ENCODE measurements at regions of chr12 and their contacts with region 1.

Region 1: GRCh38 chr12:104137913-104138796 is at the start of gene NFYB:
- DNase-seq: peak; percentile 82 to 98 (median 90)
- ATAC-seq: peak; percentile 95
- H3K4me3 ChIP-seq: peak within 1 kb of the TSS; percentile 63 to 71
- H3K4me3 Mint-ChIP-seq: peak within 1 kb of the TSS; percentile 92
- H3K27ac ChIP-seq: peak within 1 kb of the TSS; percentile 57 to 58
- H3K27ac Mint-ChIP-seq: peak within 1 kb of the TSS; percentile 87
- H3K4me1 ChIP-seq: peaks cover 31% of the 10 kb centered on the region
- H3K4me1 Mint-ChIP-seq: peaks cover 16% of the 10 kb centered on the region
- H3K27me3 ChIP-seq: no peaks in the 10 kb centered on the region
- H3K27me3 Mint-ChIP-seq: no peaks in the 10 kb centered on the region
- CTCF ChIP-seq: no peak
- total RNA-seq, gene NFYB: 9.1 to 11.2 TPM

Region 2: GRCh38 chr12:103833891-103834290 is 304.3 kb before region 1 on chr12:
- CTCF ChIA-PET with region 1: no interaction called
- POLR2A ChIA-PET with region 1: no interaction called
- intact Hi-C with region 1: no loop called
- DNase-seq: no peak
- ATAC-seq: no peak
- H3K4me3 ChIP-seq: no peak overlapping the region
- H3K4me3 Mint-ChIP-seq: no peak overlapping the region
- H3K27ac ChIP-seq: no peak overlapping the region
- H3K27ac Mint-ChIP-seq: no peak overlapping the region
- H3K4me1 ChIP-seq: no peaks in the 10 kb centered on the region
- H3K4me1 Mint-ChIP-seq: peaks cover 2% of the 10 kb centered on the region
- H3K27me3 ChIP-seq: no peaks in the 10 kb centered on the region
- H3K27me3 Mint-ChIP-seq: no peaks in the 10 kb centered on the region
- CTCF ChIP-seq: no peak

Region 3: GRCh38 chr12:104064031-104064822 is 73.9 kb before region 1 on chr12 and contains the start of gene HCFC2:
- CTCF ChIA-PET with region 1: no interaction called
- POLR2A ChIA-PET with region 1: interaction called, 9 read pairs
- intact Hi-C with region 1: loop called (anchors 1 kb)
- DNase-seq: peak; percentile 71 to 92 (median 87)
- ATAC-seq: peak; percentile 92
- H3K4me3 ChIP-seq: peak within 1 kb of the TSS; percentile 75 to 98
- H3K4me3 Mint-ChIP-seq: peak within 1 kb of the TSS; percentile 95
- H3K27ac ChIP-seq: peak within 1 kb of the TSS; percentile 61 to 64
- H3K27ac Mint-ChIP-seq: peak within 1 kb of the TSS; percentile 93
- H3K4me1 ChIP-seq: peaks cover 7% of the 10 kb centered on the region
- H3K4me1 Mint-ChIP-seq: peaks cover 29% of the 10 kb centered on the region
- H3K27me3 ChIP-seq: peaks cover 0 to 3% of the 10 kb centered on the region in 2 experiments
- H3K27me3 Mint-ChIP-seq: peaks cover 4% of the 10 kb centered on the region
- CTCF ChIP-seq: no peak
- total RNA-seq, gene HCFC2: 13.9 to 16.7 TPM

Region 4: DNA sequence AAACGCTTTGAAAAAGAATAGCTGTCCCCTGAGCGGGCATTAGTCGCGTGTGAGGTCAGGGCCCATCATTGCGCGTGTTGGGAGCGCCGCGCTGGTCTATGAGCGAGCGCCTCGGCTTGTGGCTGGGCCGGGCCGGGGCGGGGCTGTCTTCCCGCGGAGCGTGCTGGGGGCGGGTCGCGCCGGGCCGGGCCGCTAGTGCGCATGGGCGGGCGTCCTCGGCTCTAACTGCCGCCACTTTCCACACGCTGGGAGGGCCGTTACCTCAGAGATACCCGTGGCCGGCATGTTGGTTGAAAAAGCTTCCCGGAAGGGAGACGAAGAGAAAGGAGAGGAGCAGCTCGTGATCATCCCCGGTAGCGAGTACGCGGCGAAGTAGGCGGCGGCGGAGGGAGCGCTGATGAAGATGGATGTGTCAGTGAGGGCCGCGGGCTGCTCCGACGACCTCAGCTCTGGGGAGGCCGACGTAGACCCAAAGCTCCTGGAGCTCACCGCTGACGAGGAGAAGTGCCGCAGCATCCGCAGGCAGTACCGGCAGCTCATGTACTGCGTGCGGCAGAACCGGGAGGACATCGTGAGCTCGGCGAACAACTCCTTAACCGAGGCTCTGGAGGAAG is 165.5 kb after region 1 on chr12 and contains the start of gene EID3:
- CTCF ChIA-PET with region 1: no interaction called
- POLR2A ChIA-PET with region 1: interaction called, 5 read pairs
- intact Hi-C with region 1: loop called (anchors 5 kb)
- DNase-seq: peak; percentile 78 to 92 (median 91)
- ATAC-seq: peak; percentile 96
- H3K4me3 ChIP-seq: peak within 1 kb of the TSS; percentile 63 to 74
- H3K4me3 Mint-ChIP-seq: peak within 1 kb of the TSS; percentile 95
- H3K27ac ChIP-seq: peak within 1 kb of the TSS; percentile 60 to 80
- H3K27ac Mint-ChIP-seq: peak within 1 kb of the TSS; percentile 98
- H3K4me1 ChIP-seq: peaks cover 27% of the 10 kb centered on the region
- H3K4me1 Mint-ChIP-seq: peaks cover 62% of the 10 kb centered on the region
- H3K27me3 ChIP-seq: no peaks in the 10 kb centered on the region
- H3K27me3 Mint-ChIP-seq: no peaks in the 10 kb centered on the region
- CTCF ChIP-seq: no peak
- total RNA-seq, gene EID3: 11.7 to 13.0 TPM

Region 5: DNA sequence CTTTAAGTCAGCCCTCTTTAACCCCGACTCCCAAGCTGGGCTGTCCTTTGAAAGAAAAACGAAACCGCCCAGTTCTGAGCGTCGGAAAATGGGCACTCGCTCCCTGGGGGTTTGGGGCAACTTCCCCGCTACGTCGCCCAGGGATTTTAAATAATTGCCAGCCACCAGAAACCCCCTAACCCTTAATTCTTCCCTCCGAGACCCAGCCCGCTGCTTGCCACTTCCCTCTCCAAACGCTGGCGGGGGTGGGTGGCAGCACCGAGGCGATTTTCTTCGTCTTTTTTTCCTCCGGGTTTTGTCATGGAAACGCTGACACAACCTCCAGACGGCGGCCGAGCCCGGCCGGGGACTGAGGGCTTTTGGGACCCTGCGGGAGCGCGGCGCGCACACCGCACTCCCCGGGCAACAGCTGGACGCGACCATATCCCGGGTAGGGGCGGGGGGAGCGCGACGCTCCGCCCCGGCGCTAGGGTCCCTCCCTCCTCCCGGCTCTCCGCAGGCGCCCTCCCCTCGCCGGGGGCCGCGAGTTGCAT is 318.3 kb after region 1 on chr12 and contains the start of gene CHST11:
- CTCF ChIA-PET with region 1: no interaction called
- POLR2A ChIA-PET with region 1: no interaction called
- intact Hi-C with region 1: no loop called
- DNase-seq: peak; percentile 40 to 88 (median 72)
- ATAC-seq: peak; percentile 64
- H3K4me3 ChIP-seq: peak within 1 kb of the TSS; percentile 88 to 97
- H3K4me3 Mint-ChIP-seq: peak within 1 kb of the TSS; percentile 99
- H3K27ac ChIP-seq: peak within 1 kb of the TSS; percentile 70 to 82
- H3K27ac Mint-ChIP-seq: peak within 1 kb of the TSS; percentile 96
- H3K4me1 ChIP-seq: peaks cover 39% of the 10 kb centered on the region
- H3K4me1 Mint-ChIP-seq: peaks cover 42% of the 10 kb centered on the region
- H3K27me3 ChIP-seq: no peaks in the 10 kb centered on the region
- H3K27me3 Mint-ChIP-seq: no peaks in the 10 kb centered on the region
- CTCF ChIP-seq: no peak
- total RNA-seq, gene CHST11: 29.1 to 35.5 TPM

Region 6: GRCh38 chr12:104671407-104672098 is 533.4 kb after region 1 on chr12:
- CTCF ChIA-PET with region 1: no interaction called
- POLR2A ChIA-PET with region 1: no interaction called
- intact Hi-C with region 1: no loop called
- DNase-seq: peak; percentile 39 to 92 (median 63)
- ATAC-seq: peak; percentile 85
- H3K4me3 ChIP-seq: no peak overlapping the region
- H3K4me3 Mint-ChIP-seq: peak overlapping the region; percentile 54
- H3K27ac ChIP-seq: peak overlapping the region in 1 of 2 experiments; percentile 51
- H3K27ac Mint-ChIP-seq: peak overlapping the region; percentile 87
- H3K4me1 ChIP-seq: peaks cover 28% of the 10 kb centered on the region
- H3K4me1 Mint-ChIP-seq: peaks cover 46% of the 10 kb centered on the region
- H3K27me3 ChIP-seq: no peaks in the 10 kb centered on the region
- H3K27me3 Mint-ChIP-seq: no peaks in the 10 kb centered on the region
- CTCF ChIP-seq: no peak

Region 7: GRCh38 chr12:104958009-104958945 is 820.1 kb after region 1 on chr12 and contains the start of gene SLC41A2:
- CTCF ChIA-PET with region 1: no interaction called
- POLR2A ChIA-PET with region 1: no interaction called
- intact Hi-C with region 1: loop called (anchors 1 to 5 kb)
- DNase-seq: peak; percentile 52 to 90 (median 76)
- ATAC-seq: peak; percentile 90
- H3K4me3 ChIP-seq: peak within 1 kb of the TSS; percentile 61 to 97
- H3K4me3 Mint-ChIP-seq: peak within 1 kb of the TSS; percentile 94
- H3K27ac ChIP-seq: peak within 1 kb of the TSS; percentile 40 to 42
- H3K27ac Mint-ChIP-seq: peak within 1 kb of the TSS; percentile 85
- H3K4me1 ChIP-seq: peaks cover 13% of the 10 kb centered on the region
- H3K4me1 Mint-ChIP-seq: peaks cover 19% of the 10 kb centered on the region
- H3K27me3 ChIP-seq: no peaks in the 10 kb centered on the region
- H3K27me3 Mint-ChIP-seq: peaks cover 17% of the 10 kb centered on the region
- CTCF ChIP-seq: no peak
- total RNA-seq, gene SLC41A2: 3.4 to 4.2 TPM

Region 8: GRCh38 chr12:105235732-105236476 is 1097.7 kb after region 1 on chr12 and contains the start of gene APPL2:
- CTCF ChIA-PET with region 1: no interaction called
- POLR2A ChIA-PET with region 1: no interaction called
- intact Hi-C with region 1: loop called in 1 of 2 experiments (anchors 2 kb)
- DNase-seq: peak; percentile 62 to 91 (median 82)
- ATAC-seq: peak; percentile 73
- H3K4me3 ChIP-seq: peak within 1 kb of the TSS; percentile 75 to 77
- H3K4me3 Mint-ChIP-seq: peak within 1 kb of the TSS; percentile 93
- H3K27ac ChIP-seq: peak within 1 kb of the TSS; percentile 79 to 87
- H3K27ac Mint-ChIP-seq: peak within 1 kb of the TSS; percentile 97
- H3K4me1 ChIP-seq: peaks cover 36% of the 10 kb centered on the region
- H3K4me1 Mint-ChIP-seq: peaks cover 51% of the 10 kb centered on the region
- H3K27me3 ChIP-seq: no peaks in the 10 kb centered on the region
- H3K27me3 Mint-ChIP-seq: no peaks in the 10 kb centered on the region
- CTCF ChIP-seq: no peak
- total RNA-seq, gene APPL2: 53.1 to 60.6 TPM

Region 9: DNA sequence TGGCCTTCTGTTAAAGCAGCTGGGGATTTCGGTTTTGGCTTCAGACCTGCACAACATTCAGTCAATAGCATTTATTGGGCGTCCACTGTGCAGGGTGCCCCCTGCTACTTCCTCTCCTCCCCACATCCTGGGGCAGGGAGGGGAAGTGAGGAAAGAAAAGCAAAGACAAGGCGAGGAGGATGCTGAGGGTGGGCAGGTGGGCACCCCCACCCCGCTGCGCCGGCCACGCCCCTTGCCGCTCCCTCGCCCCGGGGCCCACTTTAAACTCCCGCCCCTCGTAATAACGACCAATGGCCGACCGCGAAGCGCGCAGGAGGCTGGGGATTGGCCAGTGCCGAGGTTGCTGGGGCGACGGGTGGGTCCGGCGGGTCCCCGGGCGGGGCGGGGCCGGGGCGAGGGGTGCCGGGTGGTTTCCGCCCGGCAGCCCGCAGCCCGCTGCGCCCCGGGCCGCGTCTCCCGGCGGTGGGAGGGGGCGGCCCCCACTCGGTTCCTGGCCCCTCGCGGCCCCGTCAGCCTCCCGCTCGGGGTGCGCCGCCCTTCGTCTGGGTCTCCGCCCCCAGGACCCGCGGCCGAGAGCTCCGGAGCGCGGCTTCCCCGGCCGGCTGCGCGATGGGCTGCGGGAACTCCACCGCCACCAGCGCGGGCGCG is 1192.3 kb after region 1 on chr12 and contains the start of gene C12orf75:
- CTCF ChIA-PET with region 1: no interaction called
- POLR2A ChIA-PET with region 1: no interaction called
- intact Hi-C with region 1: loop called in 1 of 2 experiments (anchors 5 kb)
- DNase-seq: peak; percentile 52 to 93 (median 85)
- ATAC-seq: peak; percentile 80
- H3K4me3 ChIP-seq: peak within 1 kb of the TSS; percentile 62 to 70
- H3K4me3 Mint-ChIP-seq: peak within 1 kb of the TSS; percentile 90
- H3K27ac ChIP-seq: peak within 1 kb of the TSS; percentile 48 to 74
- H3K27ac Mint-ChIP-seq: peak within 1 kb of the TSS; percentile 87
- H3K4me1 ChIP-seq: peaks cover 26% of the 10 kb centered on the region
- H3K4me1 Mint-ChIP-seq: peaks cover 60% of the 10 kb centered on the region
- H3K27me3 ChIP-seq: no peaks in the 10 kb centered on the region
- H3K27me3 Mint-ChIP-seq: no peaks in the 10 kb centered on the region
- CTCF ChIP-seq: no peak
- total RNA-seq, gene C12orf75: 27.5 to 27.9 TPM